ENCODE measurements at regions of chr11 and their contacts with region 1.

Region 1: DNA sequence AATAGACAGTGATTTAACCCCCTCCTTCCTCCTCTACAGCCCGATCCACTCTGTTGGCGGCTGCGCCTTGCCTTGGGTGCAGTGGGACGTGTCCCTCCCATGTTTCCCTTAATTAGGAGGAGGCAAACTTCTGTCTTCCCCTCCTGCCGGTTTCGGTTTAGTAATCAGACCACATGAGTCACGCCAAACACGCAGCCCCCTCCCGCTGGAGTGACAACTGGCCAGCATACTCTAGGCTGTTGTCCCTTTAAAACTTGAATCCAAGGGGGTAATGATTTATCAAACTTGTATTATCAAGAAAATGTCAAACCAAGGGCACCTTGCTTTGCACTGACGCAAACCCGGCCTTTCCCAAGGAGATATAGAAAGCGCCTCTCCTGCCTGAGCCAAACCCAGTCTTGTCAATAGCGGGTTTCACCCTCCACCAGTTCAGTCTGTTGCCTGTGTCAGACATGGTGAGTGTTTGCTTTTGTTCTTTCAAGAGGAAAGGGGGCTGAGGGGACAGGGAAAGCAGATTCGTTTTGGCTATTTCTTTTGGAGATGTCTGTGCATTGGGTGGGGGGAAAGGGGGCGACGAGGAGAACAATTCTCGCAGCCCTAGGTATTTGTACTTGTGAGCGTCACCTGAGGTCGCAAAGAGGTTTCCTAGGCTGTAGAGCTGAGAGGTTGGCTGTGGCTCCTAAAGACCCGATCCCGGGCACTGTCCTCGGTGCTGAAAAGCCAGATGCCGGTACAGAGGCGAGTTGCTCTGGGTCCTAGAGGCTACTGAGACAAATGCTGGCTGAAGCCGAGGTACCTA is at the start of gene SLC6A5:
- DNase-seq: no peak
- H3K4me3 ChIP-seq: no peak within 1 kb of the TSS
- CTCF ChIP-seq: no peak

Region 2: DNA sequence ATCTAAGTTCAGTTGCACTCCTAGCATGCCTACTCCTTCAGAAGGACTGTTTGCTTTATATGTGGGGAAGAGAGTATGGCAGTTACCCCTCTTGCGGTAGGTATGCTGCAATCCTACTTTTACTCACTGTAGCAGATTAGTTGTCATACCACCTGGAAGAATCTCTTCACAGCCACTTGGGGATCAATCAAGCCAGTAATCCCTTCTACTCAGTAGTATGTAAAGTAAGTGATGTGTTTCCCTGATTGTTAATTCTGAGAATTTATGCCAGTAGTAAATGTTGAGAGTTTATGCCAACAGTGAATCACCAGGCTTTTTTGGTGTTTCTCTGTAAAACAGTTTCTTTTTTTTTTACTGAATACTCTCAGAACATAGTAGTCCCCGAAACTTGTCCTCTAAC is 177.5 kb before region 1 on chr11:
- CTCF ChIA-PET with region 1: no interaction called
- POLR2A ChIA-PET with region 1: no interaction called
- DNase-seq: no peak
- H3K4me3 ChIP-seq: no peak overlapping the region
- CTCF ChIP-seq: no peak

Region 3: DNA sequence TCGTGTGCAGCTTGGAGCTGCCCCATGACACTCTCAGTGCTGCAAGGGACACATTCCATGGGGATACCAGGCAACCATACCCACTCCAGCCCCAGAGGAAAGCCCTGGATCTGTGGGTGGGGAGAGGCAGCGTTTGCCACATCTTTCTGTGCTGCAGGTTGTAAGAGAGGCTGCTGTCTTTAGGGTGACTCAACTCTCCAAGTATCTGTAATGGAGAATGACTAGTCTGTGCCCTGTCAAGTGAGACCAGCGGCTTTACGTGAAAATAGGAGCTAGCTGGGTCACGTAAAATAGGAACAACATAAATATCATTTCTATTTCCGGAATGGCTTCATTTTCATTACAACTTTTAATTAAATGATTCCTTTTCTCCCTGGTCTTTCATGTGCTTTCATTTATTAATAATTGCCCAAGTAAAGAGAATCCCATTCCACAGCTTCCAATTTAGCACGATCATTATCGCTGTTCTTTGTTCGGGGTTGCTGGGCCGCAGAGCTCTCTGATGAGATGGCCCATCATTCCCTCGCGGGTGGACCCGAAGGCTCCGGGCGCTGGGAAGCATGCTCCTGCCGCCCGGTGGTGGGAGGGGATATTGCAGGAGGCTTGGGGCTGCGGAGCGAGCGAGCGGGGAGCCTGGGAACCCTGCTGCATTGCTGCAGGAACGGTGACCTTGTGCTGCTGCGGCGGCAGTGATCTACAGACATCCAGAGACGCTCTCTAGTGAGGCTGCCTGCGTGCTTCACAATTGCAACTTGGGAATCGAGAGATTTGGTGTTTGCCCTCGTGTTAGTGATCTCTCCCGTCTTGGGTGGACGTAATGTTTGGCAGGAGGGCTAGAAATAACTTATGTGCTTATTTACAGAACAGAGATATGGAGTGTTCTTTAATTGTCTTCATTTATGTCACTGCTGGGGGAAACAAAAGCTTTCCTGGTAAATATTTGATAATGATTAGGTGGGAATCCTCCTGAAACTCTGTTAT is 10.6 kb after region 1 on chr11:
- CTCF ChIA-PET with region 1: interaction called, 11 read pairs
- POLR2A ChIA-PET with region 1: no interaction called
- DNase-seq: no peak
- H3K4me3 ChIP-seq: peak overlapping the region; percentile 18; the same call in 1 of the 2 replicates
- CTCF ChIP-seq: peak; percentile 97

Region 4: DNA sequence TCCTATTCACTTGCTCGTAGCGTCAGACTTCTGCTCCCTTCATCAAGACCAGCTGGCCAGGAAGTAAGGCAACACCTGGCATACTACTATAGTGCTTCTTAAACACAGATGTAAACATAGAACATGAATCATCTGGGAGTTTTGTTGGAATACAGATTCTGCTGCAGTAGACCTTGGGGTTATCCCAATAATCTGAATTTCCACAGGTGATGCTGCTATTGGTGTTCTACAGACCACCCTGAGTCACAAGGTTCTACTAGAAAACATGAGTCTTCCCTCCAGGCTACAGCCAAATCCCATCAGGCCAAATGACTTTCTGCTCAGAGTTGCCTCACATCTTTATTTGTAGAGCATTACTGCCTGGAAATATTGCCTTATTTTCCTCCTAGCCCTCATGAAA is 245.2 kb after region 1 on chr11:
- CTCF ChIA-PET with region 1: no interaction called
- POLR2A ChIA-PET with region 1: no interaction called
- DNase-seq: no peak
- H3K4me3 ChIP-seq: no peak overlapping the region
- CTCF ChIP-seq: no peak

Measured in AG04449 (cell line).